Activated CD8-positive, alpha-beta T cell treated with anti-CD3 and anti-CD28 coated beads for 36 hours (primary cell): ENCODE measurements at regions of chr1 and their contacts with region 1.

Region 1: DNA sequence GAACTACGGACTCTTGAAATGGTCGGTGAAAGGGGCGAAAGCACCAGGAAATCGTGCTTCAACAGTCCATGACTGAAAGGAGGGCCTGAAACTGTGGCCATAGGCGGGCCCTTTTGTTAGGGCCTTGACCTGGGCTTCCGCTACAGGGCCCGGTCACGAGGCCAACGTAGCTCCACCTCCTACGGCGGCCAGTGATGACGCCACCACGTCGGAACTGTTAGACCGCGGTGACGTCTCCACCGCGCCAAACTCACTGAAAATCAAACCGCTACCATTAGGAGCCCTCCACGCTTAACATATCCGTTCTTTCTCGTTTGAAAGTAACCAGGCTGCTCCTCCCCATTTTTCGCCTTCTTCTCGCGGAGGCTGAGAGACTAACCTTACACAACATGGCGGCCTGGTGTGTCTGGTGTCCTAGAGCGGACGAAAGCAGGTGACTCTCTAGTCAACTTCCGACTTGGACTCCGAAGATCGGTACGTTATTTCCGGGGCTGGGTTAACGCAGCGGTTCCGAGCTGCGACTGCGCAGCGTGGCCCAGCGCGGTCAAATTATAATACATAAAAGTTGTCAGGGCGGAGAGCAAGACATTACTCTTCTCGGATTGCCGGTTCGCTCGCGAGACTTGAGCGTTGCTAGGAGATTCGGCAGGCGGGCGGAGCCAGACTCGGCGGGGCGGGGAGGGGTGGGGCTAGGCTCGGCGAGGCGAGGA is 376 bp upstream of the CACYBP start:
- DNase-seq: peak; percentile 97
- ATAC-seq: peak; percentile 81
- H3K4me3 Mint-ChIP-seq: no peak overlapping the region
- H3K27ac Mint-ChIP-seq: no peak overlapping the region
- H3K4me1 Mint-ChIP-seq: peaks cover 43% of the 10 kb centered on the region
- H3K27me3 Mint-ChIP-seq: no peaks in the 10 kb centered on the region
- CTCF ChIP-seq: no peak

Region 2: GRCh38 chr1:174769961-174770549 is 229.3 kb before region 1 on chr1:
- CTCF ChIA-PET with region 1: interaction called, 13 read pairs
- POLR2A ChIA-PET with region 1: interaction called, 5 read pairs
- intact Hi-C with region 1: loop called (anchors 1 kb)
- DNase-seq: peak; percentile 7
- ATAC-seq: no peak
- H3K4me3 Mint-ChIP-seq: no peak overlapping the region
- H3K27ac Mint-ChIP-seq: no peak overlapping the region
- H3K4me1 Mint-ChIP-seq: peaks cover 6% of the 10 kb centered on the region
- H3K27me3 Mint-ChIP-seq: no peaks in the 10 kb centered on the region
- CTCF ChIP-seq: peak; percentile 77

Region 3: GRCh38 chr1:174942547-174943255 is 56.7 kb before region 1 on chr1:
- CTCF ChIA-PET with region 1: no interaction called
- POLR2A ChIA-PET with region 1: no interaction called
- intact Hi-C with region 1: no loop called
- DNase-seq: no peak
- ATAC-seq: no peak
- H3K4me3 Mint-ChIP-seq: no peak overlapping the region
- H3K27ac Mint-ChIP-seq: no peak overlapping the region
- H3K4me1 Mint-ChIP-seq: peaks cover 11% of the 10 kb centered on the region
- H3K27me3 Mint-ChIP-seq: no peaks in the 10 kb centered on the region
- CTCF ChIP-seq: no peak

Region 4: DNA sequence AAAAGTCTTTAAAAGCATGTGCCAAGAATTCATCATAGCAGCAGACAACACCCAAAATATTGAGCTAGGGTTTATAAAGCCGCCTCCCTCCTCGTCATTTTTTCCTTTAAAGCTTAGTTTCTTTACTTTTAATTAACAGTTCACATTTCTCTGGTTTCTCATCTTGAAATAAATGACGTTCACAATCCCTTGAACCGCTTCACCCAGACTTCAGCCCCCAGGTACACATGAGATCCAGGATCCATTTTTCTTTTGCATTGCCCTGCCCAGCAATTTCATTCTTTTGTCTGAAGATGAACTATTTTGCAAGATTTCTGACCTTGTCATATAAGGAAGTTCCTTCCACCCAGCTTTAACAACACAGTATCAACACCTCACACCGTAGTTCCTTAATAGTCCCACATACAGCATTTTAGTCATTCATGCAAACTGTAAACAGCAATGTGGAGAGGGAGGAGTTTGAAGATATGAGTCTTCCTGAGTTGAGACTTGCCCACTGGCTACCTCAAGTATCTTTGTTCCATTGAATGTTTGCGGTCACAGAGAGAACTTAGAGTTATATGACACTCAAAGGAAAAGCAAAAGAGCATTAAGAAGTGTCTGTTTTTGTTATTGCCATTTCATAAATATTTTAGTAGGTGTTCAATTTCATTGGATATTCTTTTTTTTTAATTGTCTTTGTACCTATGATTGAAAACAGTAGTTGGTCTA is 35.0 kb before region 1 on chr1:
- CTCF ChIA-PET with region 1: interaction called, 11 read pairs
- POLR2A ChIA-PET with region 1: interaction called, 4 read pairs
- intact Hi-C with region 1: loop called (anchors 2 kb)
- DNase-seq: peak; percentile 34
- ATAC-seq: peak; percentile 79
- H3K4me3 Mint-ChIP-seq: peak overlapping the region; percentile 68
- H3K27ac Mint-ChIP-seq: peak overlapping the region; percentile 84
- H3K4me1 Mint-ChIP-seq: peaks cover 52% of the 10 kb centered on the region
- H3K27me3 Mint-ChIP-seq: no peaks in the 10 kb centered on the region
- CTCF ChIP-seq: no peak

Region 5: DNA sequence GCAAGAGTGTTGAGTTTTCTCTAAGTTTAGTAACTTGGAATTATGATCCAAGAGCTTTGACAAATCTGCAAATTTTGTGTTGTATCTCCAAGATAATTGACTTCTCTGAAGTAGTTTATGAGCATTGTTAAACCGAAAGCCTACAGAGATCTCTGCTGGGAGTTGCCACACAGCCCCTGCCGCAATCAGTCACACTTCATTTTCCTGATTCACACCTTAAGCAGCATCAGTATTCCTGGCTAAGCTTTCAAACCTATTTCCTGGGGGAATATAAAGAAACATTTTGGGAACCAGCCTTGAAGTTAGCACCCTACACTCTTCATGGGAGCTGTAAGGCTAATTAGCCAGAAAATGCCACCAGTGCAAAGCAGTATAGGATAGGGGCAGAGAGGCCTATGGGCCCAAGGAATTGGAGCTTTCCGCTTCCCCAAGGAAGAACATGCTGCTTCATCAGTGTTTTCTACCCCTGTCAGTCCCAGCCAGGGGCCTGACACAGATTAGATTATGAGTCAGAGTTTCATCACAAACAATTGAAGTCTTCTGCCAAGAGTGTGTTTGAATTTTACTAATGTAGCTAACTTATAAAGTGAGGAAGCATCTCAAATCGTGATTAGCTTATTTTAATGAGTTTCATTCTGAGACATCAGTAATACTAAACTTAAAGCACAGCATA is 22.8 kb before region 1 on chr1:
- CTCF ChIA-PET with region 1: interaction called, 16 read pairs
- POLR2A ChIA-PET with region 1: interaction called, 3 read pairs
- intact Hi-C with region 1: no loop called
- DNase-seq: peak; percentile 25
- ATAC-seq: peak; percentile 86
- H3K4me3 Mint-ChIP-seq: no peak overlapping the region
- H3K27ac Mint-ChIP-seq: peak overlapping the region; percentile 75
- H3K4me1 Mint-ChIP-seq: peaks cover 38% of the 10 kb centered on the region
- H3K27me3 Mint-ChIP-seq: no peaks in the 10 kb centered on the region
- CTCF ChIP-seq: no peak

Region 6: GRCh38 chr1:175023043-175023921 is 23.9 kb after region 1 on chr1 and contains the start of gene MRPS14:
- CTCF ChIA-PET with region 1: interaction called, 21 read pairs
- POLR2A ChIA-PET with region 1: interaction called, 53 read pairs
- intact Hi-C with region 1: loop called (anchors 2 kb)
- DNase-seq: peak; percentile 99
- ATAC-seq: peak; percentile 92
- H3K4me3 Mint-ChIP-seq: peak within 1 kb of the TSS; percentile 93
- H3K27ac Mint-ChIP-seq: peak within 1 kb of the TSS; percentile 93
- H3K4me1 Mint-ChIP-seq: peaks cover 30% of the 10 kb centered on the region
- H3K27me3 Mint-ChIP-seq: no peaks in the 10 kb centered on the region
- CTCF ChIP-seq: no peak
- total RNA-seq, gene MRPS14: 42.1 to 45.7 TPM